ENCODE measurements at regions of chr1 and their contacts with region 1.

Region 1: DNA sequence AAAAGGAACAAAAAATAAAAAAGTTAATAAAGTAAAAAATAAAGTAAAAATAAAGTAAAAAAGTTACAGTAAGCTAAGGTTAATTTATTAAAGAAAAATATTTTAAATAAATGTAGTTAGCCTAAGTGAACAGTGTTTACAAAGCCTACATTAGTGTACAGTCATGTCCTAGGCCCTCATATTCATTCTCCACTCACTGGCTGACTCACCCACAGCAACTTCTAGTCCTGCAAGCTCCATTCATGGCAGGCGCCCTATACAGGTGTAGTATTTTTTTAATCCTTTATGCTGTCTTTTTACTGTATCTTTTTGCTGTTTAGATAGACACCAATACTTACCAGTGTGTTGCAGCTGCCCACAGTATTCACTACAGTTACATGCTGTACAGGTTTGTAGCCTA is 12.4 kb downstream of the ADAR start:
- DNase-seq: no peak
- H3K4me3 ChIP-seq: no peak overlapping the region
- H3K27ac ChIP-seq: no peak overlapping the region
- H3K4me1 ChIP-seq: no peaks in the 10 kb centered on the region
- H3K27me3 ChIP-seq: no peaks in the 10 kb centered on the region

Region 2: DNA sequence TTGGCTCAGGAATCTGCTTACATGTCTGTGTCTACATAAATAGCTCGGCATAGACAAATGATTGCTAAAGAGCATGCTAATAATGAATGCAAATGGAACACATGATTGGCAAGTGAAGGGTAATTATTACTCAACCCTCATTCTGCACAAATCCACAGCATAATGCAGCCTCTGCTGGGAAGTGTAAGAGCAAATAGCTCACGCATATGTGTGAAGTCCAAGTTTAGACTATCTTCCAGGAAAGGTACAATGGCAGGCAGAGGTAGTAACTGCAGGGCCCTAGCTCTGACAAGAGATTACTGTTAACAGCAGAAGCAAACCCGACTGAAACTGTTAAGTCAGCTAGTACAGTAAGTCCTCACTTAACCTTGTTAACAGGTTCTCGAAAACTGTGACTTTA is 197.5 kb before region 1 on chr1:
- CTCF ChIA-PET with region 1: no interaction called
- POLR2A ChIA-PET with region 1: no interaction called
- DNase-seq: no peak
- H3K4me3 ChIP-seq: no peak overlapping the region
- H3K27ac ChIP-seq: no peak overlapping the region
- H3K4me1 ChIP-seq: peaks cover 6 to 34% (median 18%) of the 10 kb centered on the region in 4 experiments
- H3K27me3 ChIP-seq: no peaks in the 10 kb centered on the region

Region 3: DNA sequence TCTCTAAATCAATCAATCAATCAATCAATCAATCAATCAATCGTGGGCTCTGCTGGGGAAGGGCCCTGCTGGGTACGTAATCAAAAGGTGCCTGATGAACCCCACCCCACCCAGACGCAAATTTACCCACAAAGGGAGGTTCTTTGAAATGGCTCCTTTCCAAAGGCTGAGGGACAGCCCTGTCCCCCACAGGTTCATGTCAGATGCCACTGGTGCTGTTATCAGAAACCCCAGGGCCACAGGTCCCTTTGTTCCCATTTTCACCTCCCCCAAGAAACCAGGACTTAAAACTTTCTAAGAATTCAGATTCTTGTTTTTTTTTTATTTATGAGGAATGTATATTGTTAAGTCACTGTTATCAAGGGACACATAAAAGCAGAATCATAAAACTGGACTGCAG is 13.9 kb before region 1 on chr1:
- CTCF ChIA-PET with region 1: interaction called, 11 read pairs
- POLR2A ChIA-PET with region 1: no interaction called
- DNase-seq: no peak
- H3K4me3 ChIP-seq: no peak overlapping the region
- H3K27ac ChIP-seq: no peak overlapping the region
- H3K4me1 ChIP-seq: no peaks in the 10 kb centered on the region
- H3K27me3 ChIP-seq: no peaks in the 10 kb centered on the region